Breast epithelium (tissue), 4 donors: ENCODE measurements at regions of chr4 and their contacts with region 1.

Region 1: DNA sequence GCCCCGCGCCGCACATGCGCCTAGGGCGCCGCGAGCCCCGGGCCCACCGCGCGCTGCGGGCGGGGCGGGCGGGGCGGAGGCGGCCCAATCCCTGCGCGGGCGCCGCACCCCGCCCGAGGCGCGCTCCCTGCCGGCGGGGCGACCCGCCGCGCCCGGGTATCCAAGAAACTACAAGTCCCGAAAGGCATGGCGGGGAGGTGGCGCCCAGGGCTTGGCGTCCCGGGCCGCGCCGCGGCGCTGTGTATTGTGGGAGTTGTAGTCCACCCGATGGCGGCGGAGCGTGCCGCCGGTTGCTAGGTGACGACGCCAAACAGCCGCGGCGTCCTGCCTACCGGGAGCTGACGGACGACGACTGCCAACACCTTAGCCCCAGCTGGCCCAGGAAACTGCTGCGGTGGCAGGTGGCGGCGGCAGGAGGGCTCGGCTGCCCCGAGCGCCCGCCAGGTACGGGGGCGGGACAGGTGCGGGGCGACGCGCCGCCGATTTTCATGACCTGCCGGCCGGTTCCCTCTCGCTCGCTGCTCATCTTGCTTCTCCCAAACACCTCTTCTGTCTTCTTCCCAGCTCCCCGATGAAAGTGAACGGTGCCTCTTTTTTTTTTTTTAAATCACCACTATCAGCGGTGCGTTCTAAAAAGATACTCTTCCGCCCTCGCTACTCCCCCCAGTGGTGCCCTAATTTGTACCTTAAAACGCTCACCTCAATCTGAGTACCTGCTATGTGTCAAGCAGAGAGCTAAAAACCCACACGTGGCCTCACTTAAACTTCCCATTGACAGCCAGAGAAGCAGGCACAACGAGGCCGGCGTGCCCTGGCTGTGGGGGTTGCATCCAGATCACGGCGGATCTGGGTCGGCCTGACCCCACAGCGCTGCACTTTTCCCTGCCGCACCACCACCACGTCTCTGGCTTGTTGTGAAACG is at the start of gene CFAP99:
- DNase-seq: peak; percentile 95 to 97
- H3K4me3 ChIP-seq: peak within 1 kb of the TSS; percentile 52 to 90 (median 67)
- H3K27ac ChIP-seq: peak within 1 kb of the TSS; percentile 41 to 75
- H3K4me1 ChIP-seq: no peaks in the 10 kb centered on the region
- H3K27me3 ChIP-seq: peaks cover 0 to 56% of the 10 kb centered on the region in 2 donors
- CTCF ChIP-seq: peak in 1 of 3 donors; percentile 11
- POLR2A ChIP-seq: no peak
- total RNA-seq, gene CFAP99: 0.15 to 2.0 TPM in 2 of 3 donors, not detected in the other

Region 2: GRCh38 chr4:2255501-2256155 is 163.3 kb before region 1 on chr4:
- intact Hi-C with region 1: loop called (anchors 10 kb)
- DNase-seq: peak; percentile 58 to 73
- H3K4me3 ChIP-seq: peak overlapping the region in 2 of 3 donors; percentile 27 to 58
- H3K27ac ChIP-seq: peak overlapping the region; percentile 85 to 96
- H3K4me1 ChIP-seq: peaks cover 29 to 32% of the 10 kb centered on the region in 2 donors
- H3K27me3 ChIP-seq: no peaks in the 10 kb centered on the region
- CTCF ChIP-seq: no peak
- POLR2A ChIP-seq: no peak